ENCODE measurements at regions of chr6 and their contacts with region 1.

Region 1: GRCh38 chr6:148530394-148530953 is 187.8 kb downstream of the SASH1 start:
- DNase-seq: peak; percentile 94
- H3K4me3 ChIP-seq: peak overlapping the region; percentile 42
- CTCF ChIP-seq: no peak

Region 2: GRCh38 chr6:148509800-148510581 is 20.5 kb before region 1 on chr6:
- CTCF ChIA-PET with region 1: interaction called, 3 read pairs
- POLR2A ChIA-PET with region 1: interaction called, 10 read pairs
- DNase-seq: peak; percentile 95
- H3K4me3 ChIP-seq: peak overlapping the region; percentile 65
- CTCF ChIP-seq: no peak

Measured in AG04449 (cell line).